IMR-90 (cell line): ENCODE measurements at regions of chr11 and their contacts with region 1.

Region 1: GRCh38 chr11:66651016-66651415 is 12.5 kb downstream of the RBM4 start:
- DNase-seq: peak; percentile 66
- ATAC-seq: no peak
- H3K4me3 ChIP-seq: no peak overlapping the region
- H3K27ac ChIP-seq: no peak overlapping the region
- H3K4me1 ChIP-seq: peaks cover under 1% of the 10 kb centered on the region; the same call in 1 of the 2 replicates
- H3K27me3 ChIP-seq: no peaks in the 10 kb centered on the region
- CTCF ChIP-seq: no peak
- POLR2A ChIP-seq: no peak
- RAD21 ChIP-seq: no peak

Region 2: GRCh38 chr11:66126808-66127555 is 524.0 kb before region 1 on chr11:
- CTCF ChIA-PET with region 1: no interaction called
- POLR2A ChIA-PET with region 1: no interaction called
- dilution Hi-C with region 1: no loop called
- in situ Hi-C with region 1: no loop called
- intact Hi-C with region 1: no loop called
- DNase-seq: peak; percentile 79
- ATAC-seq: peak; percentile 90
- H3K4me3 ChIP-seq: no peak overlapping the region
- H3K27ac ChIP-seq: peak overlapping the region; percentile 17
- H3K4me1 ChIP-seq: peaks cover 14% of the 10 kb centered on the region
- H3K27me3 ChIP-seq: no peaks in the 10 kb centered on the region
- CTCF ChIP-seq: no peak
- POLR2A ChIP-seq: no peak
- RAD21 ChIP-seq: peak; percentile 12; the same call in 1 of the 2 replicates

Region 3: DNA sequence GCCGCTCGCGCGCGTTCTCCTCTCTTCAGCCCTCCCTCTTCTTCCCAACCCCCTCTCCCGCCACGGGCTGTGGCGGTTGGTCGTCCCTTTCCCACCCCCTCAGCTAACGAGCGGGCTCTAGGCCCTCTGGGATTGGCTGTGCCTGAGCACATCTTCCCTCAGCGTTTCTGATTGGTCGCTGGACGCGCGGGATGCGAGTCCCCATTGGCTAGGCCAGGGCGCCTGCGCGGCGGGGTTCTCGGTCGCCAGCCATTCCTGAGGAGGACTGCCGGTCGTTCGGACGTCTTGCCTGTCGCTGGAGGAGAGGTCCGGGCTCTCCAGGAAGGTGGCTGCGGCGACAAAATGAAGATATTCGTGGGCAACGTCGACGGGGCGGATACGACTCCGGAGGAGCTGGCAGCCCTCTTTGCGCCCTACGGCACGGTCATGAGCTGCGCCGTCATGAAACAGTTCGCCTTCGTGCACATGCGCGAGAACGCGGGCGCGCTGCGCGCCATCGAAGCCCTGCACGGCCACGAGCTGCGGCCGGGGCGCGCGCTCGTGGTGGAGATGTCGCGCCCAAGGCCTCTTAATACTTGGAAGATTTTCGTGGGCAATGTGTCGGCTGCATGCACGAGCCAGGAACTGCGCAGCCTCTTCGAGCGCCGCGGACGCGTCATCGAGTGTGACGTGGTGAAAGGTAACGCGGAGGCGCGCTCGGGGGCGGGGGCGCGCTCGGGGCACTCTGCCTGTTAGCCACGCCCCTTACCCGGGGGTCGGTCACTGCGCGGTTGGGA is 34.4 kb before region 1 on chr11 and contains the start of gene RBM14:
- CTCF ChIA-PET with region 1: no interaction called
- POLR2A ChIA-PET with region 1: no interaction called
- dilution Hi-C with region 1: no loop called
- in situ Hi-C with region 1: no loop called
- intact Hi-C with region 1: no loop called
- DNase-seq: peak; percentile 99
- ATAC-seq: peak; percentile 95
- H3K4me3 ChIP-seq: peak within 1 kb of the TSS; percentile 65
- H3K27ac ChIP-seq: peak within 1 kb of the TSS; percentile 86
- H3K4me1 ChIP-seq: peaks cover 2% of the 10 kb centered on the region; the same call in 1 of the 2 replicates
- H3K27me3 ChIP-seq: no peaks in the 10 kb centered on the region
- CTCF ChIP-seq: no peak
- POLR2A ChIP-seq: peak; percentile 99
- RAD21 ChIP-seq: no peak; the same call in 1 of the 2 replicates
- total RNA-seq, gene RBM14: 9.3 and 12.2 TPM in 2 replicates

Region 4: DNA sequence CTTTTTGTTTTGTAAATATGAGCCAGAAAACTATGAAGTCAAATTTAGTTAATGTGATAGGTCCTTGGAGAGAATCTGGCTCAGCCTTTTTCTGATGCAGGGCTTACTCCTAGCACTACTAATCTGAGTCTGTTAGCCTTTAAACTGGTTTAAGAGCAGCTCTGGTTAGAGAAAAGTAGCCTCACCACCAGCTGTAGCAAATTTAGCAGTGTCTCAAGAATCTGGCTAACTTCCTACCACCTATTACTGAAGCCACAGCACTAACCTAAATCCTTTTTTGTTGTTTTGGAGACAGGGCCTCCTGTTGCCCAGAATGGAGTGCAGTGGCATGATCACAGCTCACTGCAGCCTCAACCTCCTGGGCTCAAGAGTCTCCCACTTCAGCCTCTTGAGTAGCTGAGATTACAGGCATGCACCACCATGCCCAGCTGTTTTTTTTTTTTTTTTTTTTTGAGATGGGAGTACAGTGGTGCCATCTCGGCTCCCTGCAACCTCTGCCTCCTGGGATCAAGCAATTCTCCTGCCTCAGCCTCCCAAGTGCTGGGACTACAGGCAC is 12.8 kb after region 1 on chr11:
- CTCF ChIA-PET with region 1: interaction called, 3 read pairs
- POLR2A ChIA-PET with region 1: interaction called, 10 read pairs
- dilution Hi-C with region 1: no loop called
- in situ Hi-C with region 1: no loop called
- intact Hi-C with region 1: no loop called
- DNase-seq: no peak
- ATAC-seq: no peak
- H3K4me3 ChIP-seq: no peak overlapping the region
- H3K27ac ChIP-seq: no peak overlapping the region
- H3K4me1 ChIP-seq: no peaks in the 10 kb centered on the region
- H3K27me3 ChIP-seq: no peaks in the 10 kb centered on the region
- CTCF ChIP-seq: no peak
- POLR2A ChIP-seq: no peak
- RAD21 ChIP-seq: no peak